K562 (cell line): ENCODE measurements at regions of chr10 and their contacts with region 1.

Region 1: GRCh38 chr10:22251751-22252223 is 34.0 kb upstream of the EBLN1 start:
- DNase-seq: no peak
- ATAC-seq: no peak
- H3K4me3 ChIP-seq: no peak overlapping the region
- H3K27ac ChIP-seq: no peak overlapping the region
- H3K4me1 ChIP-seq: peaks cover 0 to 9% of the 10 kb centered on the region in 2 experiments; a peak in 4 of 5 replicates
- H3K27me3 ChIP-seq: no peaks in the 10 kb centered on the region
- CTCF ChIP-seq: no peak
- EP300 ChIP-seq: no peak
- POLR2A ChIP-seq: no peak
- RAD21 ChIP-seq: no peak

Region 2: GRCh38 chr10:22534849-22535604 is 283.2 kb after region 1 on chr10:
- CTCF ChIA-PET with region 1: no interaction called
- POLR2A ChIA-PET with region 1: no interaction called
- in situ Hi-C with region 1: no loop called
- intact Hi-C with region 1: loop called (anchors 10 kb)
- DNase-seq: no peak
- ATAC-seq: no peak; the same call in 2 of the 3 replicates
- H3K4me3 ChIP-seq: no peak overlapping the region
- H3K27ac ChIP-seq: no peak overlapping the region
- H3K4me1 ChIP-seq: no peaks in the 10 kb centered on the region
- H3K27me3 ChIP-seq: no peaks in the 10 kb centered on the region
- CTCF ChIP-seq: no peak
- EP300 ChIP-seq: no peak
- POLR2A ChIP-seq: no peak
- RAD21 ChIP-seq: no peak